AG04450 (cell line): ENCODE measurements at regions of chr4 and their contacts with region 1.

Region 1: GRCh38 chr4:113499696-113500095 is 261.8 kb downstream of the CAMK2D start:
- DNase-seq: peak; percentile 71
- H3K4me3 ChIP-seq: no peak overlapping the region
- H3K27ac ChIP-seq: no peak overlapping the region
- H3K27me3 ChIP-seq: no peaks in the 10 kb centered on the region
- CTCF ChIP-seq: no peak

Region 2: DNA sequence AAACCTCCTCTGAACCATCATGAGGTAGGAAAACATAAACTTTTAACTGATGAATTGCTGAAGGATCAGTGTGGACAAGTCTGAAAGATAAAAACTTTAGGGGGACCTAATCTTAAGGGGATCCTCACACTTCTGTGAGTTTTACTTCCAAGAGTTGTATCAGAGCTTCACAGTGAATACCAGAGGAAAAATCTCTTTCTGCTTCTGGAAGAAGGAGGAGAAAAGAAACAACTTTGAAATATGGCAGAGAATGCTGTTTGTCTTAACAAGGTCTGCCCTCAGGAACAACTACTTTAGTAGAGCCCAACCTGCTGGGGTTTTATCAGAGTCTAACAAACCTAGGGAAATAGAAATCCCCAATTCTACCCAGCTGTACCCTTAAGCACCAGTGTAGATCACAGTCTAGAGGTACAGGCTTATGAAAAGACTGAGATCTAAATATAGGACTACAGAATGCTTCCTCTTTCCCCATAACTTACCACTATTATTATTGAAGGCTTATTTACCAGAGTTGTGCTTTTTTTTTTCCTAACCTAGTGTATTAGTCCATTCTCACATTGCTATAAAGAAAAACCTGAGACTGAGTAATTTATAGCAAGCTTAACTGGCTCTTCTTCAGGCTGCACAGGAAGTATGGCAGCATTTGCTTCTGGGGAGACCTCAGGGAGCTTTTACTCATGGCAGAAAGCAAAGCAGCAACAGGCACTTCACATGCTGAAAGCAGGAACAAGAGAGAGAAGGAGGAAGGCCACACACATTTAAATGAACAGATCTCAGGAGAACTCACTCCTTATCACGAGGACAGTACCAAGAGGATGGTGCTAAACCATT is 93.9 kb after region 1 on chr4:
- CTCF ChIA-PET with region 1: no interaction called
- POLR2A ChIA-PET with region 1: no interaction called
- DNase-seq: no peak
- H3K4me3 ChIP-seq: no peak overlapping the region
- H3K27ac ChIP-seq: no peak overlapping the region
- H3K27me3 ChIP-seq: no peaks in the 10 kb centered on the region
- CTCF ChIP-seq: no peak

Region 3: GRCh38 chr4:113701169-113701568 is 201.5 kb after region 1 on chr4:
- CTCF ChIA-PET with region 1: no interaction called
- POLR2A ChIA-PET with region 1: interaction called, 13 read pairs
- DNase-seq: no peak
- H3K4me3 ChIP-seq: no peak overlapping the region
- H3K27ac ChIP-seq: no peak overlapping the region
- H3K27me3 ChIP-seq: no peaks in the 10 kb centered on the region
- CTCF ChIP-seq: no peak